ENCODE measurements at regions of chr7 and their contacts with region 1.

Region 1: GRCh38 chr7:7103343-7104313 is 78.7 kb upstream of the C1GALT1 start:
- DNase-seq: no peak
- ATAC-seq: peak; percentile 74 to 80
- H3K4me3 ChIP-seq: no peak overlapping the region
- H3K27ac ChIP-seq: no peak overlapping the region
- H3K4me1 ChIP-seq: peaks cover 0 to 6% of the 10 kb centered on the region in 2 donors
- H3K27me3 ChIP-seq: no peaks in the 10 kb centered on the region
- CTCF ChIP-seq: peak; percentile 31 to 70 (median 59)
- POLR2A ChIP-seq: no peak

Region 2: DNA sequence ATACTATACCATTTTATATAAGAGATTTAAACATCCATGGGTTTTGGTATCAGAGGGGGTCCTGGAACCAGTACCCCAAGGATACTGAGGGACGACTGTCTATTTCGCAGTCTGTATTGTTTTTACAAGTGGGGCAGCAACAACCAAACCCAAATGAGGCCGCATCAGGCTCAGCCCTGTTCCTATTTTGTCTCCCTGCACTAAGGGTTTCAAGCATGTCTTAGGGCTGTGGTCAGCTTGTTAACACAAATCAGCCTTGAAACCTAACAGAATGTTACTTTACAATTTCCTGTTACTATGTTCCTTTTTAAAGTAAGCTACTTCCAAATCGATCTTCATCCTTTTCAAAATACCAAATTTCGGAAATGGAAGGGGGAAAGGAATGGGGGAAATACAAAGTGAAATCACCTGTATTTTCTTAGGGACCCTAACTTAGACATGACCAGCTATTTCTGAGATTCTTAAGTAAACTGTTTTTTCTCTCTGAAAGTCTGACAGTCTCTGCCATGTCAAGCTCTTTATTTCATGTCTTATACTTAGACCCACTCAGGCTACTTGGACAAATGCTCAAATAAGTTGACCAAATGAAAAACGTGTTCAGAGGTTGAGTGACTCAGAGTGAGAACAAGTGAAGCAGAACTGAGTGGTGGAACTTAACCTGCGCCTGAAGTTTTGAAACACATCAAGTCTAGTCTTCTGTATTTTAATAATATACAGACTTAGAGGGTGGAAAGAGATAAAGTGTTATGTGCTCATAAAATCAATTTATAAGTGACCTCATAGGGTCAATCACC is 154.5 kb after region 1 on chr7:
- in situ Hi-C with region 1: no loop called
- intact Hi-C with region 1: loop called (anchors 10 kb)
- DNase-seq: no peak
- ATAC-seq: no peak
- H3K4me3 ChIP-seq: no peak overlapping the region
- H3K27ac ChIP-seq: no peak overlapping the region
- H3K4me1 ChIP-seq: peaks cover 8 to 12% of the 10 kb centered on the region in 2 donors
- H3K27me3 ChIP-seq: no peaks in the 10 kb centered on the region
- CTCF ChIP-seq: no peak
- POLR2A ChIP-seq: no peak

Region 3: DNA sequence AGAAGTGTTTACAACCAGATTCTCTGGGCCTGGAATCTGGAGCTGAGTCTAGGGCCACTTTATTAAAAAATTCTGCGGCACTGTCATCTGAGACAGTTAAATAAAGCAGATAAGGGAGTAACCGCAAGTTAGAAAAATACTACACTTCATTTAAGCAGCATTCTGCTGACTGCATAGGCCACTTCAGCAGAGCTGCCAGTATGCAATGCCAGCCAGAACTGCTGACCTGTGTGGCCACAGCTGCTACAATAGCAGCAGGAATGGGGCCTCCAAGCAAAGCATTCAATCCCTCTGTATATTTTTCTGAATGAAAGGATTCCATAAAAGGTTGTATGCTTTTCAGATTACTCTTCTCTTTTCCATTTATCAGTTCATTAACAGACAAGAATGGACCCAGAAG is 296.1 kb after region 1 on chr7:
- in situ Hi-C with region 1: loop called in 1 of 4 experiments (anchors 25 kb)
- intact Hi-C with region 1: no loop called
- DNase-seq: no peak
- ATAC-seq: no peak
- H3K4me3 ChIP-seq: no peak overlapping the region
- H3K27ac ChIP-seq: no peak overlapping the region
- H3K4me1 ChIP-seq: no peaks in the 10 kb centered on the region
- H3K27me3 ChIP-seq: no peaks in the 10 kb centered on the region
- CTCF ChIP-seq: no peak
- POLR2A ChIP-seq: no peak

Region 4: GRCh38 chr7:7529328-7529727 is 425.7 kb after region 1 on chr7:
- in situ Hi-C with region 1: loop called in 2 of 4 experiments (anchors 25 kb)
- intact Hi-C with region 1: no loop called
- DNase-seq: no peak
- ATAC-seq: no peak
- H3K4me3 ChIP-seq: no peak overlapping the region
- H3K27ac ChIP-seq: no peak overlapping the region
- H3K4me1 ChIP-seq: no peaks in the 10 kb centered on the region
- H3K27me3 ChIP-seq: no peaks in the 10 kb centered on the region
- CTCF ChIP-seq: no peak
- POLR2A ChIP-seq: no peak

Measured in gastrocnemius medialis (tissue), 4 donors.